ENCODE measurements at regions of chr2 and their contacts with region 1.

Region 1: DNA sequence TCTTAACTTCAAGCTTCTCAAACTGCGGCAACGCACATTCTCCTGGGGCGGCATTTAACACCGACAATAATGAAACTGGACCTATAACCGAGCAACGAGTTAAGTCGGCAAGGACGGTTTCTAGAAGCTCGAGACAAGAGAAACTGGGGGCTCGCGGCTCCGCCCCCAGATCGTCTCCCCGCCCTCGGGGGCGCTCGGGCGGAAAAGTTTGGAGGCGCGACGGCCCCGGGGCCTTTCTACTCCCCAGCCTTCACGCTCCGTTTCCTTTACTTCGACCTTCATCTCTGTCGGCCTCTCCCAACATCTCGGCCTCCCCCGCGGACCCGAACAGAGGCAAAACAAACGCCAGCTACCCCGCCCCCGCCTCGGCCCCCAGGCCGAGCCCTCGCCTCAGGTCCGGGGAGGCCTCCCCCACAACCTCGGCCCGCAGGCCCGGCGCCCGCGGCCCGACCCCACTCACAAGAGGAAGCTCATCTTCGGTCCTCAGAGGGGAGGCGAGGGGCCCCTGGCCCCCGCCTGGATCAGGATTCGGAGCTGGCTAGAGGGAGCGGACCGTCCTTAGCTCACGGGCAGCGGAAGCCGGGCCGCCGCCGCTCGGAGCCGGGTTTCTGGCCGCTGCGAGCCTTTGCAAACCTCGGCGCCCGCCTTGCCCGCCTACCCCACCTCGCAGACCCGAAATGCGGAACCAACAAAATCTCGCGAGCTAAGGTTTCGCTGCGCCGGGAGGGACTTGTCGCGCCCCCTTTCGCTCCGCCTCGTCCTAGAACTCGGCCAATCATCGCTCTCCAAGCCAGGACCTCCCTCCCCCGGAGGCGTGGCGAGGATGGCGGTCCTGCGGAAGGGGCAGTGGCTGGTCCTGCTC is at the start of gene MOB1A:
- DNase-seq: peak; percentile 93 to 99 (median 97)
- ATAC-seq: peak; percentile 95
- H3K4me3 ChIP-seq: peak within 1 kb of the TSS; percentile 62
- H3K4me3 Mint-ChIP-seq: peak within 1 kb of the TSS; percentile 95
- H3K27ac ChIP-seq: peak within 1 kb of the TSS; percentile 89 to 96
- H3K27ac Mint-ChIP-seq: peak within 1 kb of the TSS; percentile 91
- H3K4me1 ChIP-seq: peaks cover 35% of the 10 kb centered on the region
- H3K4me1 Mint-ChIP-seq: peaks cover 39% of the 10 kb centered on the region
- H3K27me3 ChIP-seq: no peaks in the 10 kb centered on the region
- H3K27me3 Mint-ChIP-seq: no peaks in the 10 kb centered on the region
- CTCF ChIP-seq: no peak
- total RNA-seq, gene MOB1A: 150 to 159 TPM

Region 2: DNA sequence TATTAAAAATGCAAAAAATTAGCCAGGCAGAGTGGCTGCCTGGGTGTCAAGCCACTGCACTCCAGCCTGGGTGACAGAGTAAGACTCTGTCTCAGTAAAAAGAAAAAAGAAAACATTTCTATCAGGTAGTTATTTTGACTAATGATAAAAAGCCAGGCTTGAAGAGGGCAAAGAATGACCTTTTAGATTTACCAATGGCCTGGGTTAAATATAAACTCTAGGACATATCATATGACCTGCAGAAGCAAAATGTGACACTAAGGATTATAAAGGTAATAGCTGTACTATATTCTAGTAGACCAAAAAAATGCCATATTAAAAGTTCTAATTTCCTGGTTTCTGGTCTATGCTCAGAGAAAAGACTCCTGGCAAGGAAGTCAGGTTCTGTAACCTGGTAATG is 365.8 kb before region 1 on chr2:
- CTCF ChIA-PET with region 1: no interaction called
- POLR2A ChIA-PET with region 1: no interaction called
- intact Hi-C with region 1: no loop called
- DNase-seq: no peak
- ATAC-seq: no peak
- H3K4me3 ChIP-seq: no peak overlapping the region
- H3K4me3 Mint-ChIP-seq: no peak overlapping the region
- H3K27ac ChIP-seq: no peak overlapping the region
- H3K27ac Mint-ChIP-seq: no peak overlapping the region
- H3K4me1 ChIP-seq: no peaks in the 10 kb centered on the region
- H3K4me1 Mint-ChIP-seq: no peaks in the 10 kb centered on the region
- H3K27me3 ChIP-seq: peaks cover 0 to 2% of the 10 kb centered on the region in 2 experiments
- H3K27me3 Mint-ChIP-seq: peaks cover 21% of the 10 kb centered on the region
- CTCF ChIP-seq: no peak

Region 3: DNA sequence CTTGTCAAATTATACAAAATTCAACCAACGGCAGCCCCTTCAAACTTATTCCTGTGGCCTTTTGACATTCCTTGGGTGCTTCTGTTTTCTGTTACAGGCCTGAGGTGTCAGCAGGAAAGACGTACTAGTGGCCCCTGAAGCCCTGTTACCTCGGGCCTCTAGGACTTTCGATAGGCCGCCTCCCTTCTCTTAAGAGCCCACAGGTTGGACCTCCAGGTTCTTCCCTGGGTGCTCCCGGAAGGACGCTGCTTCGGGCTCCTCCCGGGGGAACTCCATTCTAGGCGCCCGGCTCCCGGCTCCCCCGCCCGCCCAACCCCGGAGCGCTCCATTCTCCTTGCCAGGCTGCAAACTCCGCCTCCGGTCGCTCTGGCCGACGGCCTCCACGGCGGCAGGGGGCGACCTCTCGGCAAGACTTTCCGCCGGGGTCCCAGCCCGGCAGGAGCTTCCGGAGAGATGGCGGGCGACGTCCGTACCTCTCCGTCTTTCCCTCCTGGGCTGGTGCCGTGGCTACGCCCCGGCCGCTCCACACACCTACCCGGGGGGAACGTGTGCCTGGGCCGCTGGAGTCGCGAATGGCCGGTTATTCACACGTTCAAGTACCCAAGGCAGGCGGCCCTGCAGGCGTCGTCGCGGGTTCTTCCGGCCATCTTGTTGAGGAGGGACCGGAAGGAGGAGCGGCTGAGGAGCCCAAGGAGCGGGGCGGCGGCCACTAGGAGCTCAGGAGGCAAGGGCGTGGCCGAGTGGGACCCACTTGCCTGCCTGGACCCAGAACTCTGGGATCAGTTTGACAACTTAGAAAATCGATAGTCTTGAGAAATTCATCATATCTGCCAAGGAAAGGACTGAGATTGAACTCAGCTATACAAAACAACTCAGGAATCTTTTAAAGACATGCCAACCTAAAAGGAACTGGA is 58.3 kb before region 1 on chr2:
- CTCF ChIA-PET with region 1: interaction called, 11 read pairs
- POLR2A ChIA-PET with region 1: interaction called, 22 read pairs
- intact Hi-C with region 1: loop called in 1 of 2 experiments (anchors 1 kb)
- DNase-seq: peak; percentile 66 to 92 (median 82)
- ATAC-seq: peak; percentile 95
- H3K4me3 ChIP-seq: peak overlapping the region; percentile 86
- H3K4me3 Mint-ChIP-seq: peak overlapping the region; percentile 90
- H3K27ac ChIP-seq: peak overlapping the region; percentile 81 to 94
- H3K27ac Mint-ChIP-seq: peak overlapping the region; percentile 88
- H3K4me1 ChIP-seq: peaks cover 10% of the 10 kb centered on the region
- H3K4me1 Mint-ChIP-seq: peaks cover 11% of the 10 kb centered on the region
- H3K27me3 ChIP-seq: no peaks in the 10 kb centered on the region
- H3K27me3 Mint-ChIP-seq: no peaks in the 10 kb centered on the region
- CTCF ChIP-seq: peak; percentile 63

Region 4: DNA sequence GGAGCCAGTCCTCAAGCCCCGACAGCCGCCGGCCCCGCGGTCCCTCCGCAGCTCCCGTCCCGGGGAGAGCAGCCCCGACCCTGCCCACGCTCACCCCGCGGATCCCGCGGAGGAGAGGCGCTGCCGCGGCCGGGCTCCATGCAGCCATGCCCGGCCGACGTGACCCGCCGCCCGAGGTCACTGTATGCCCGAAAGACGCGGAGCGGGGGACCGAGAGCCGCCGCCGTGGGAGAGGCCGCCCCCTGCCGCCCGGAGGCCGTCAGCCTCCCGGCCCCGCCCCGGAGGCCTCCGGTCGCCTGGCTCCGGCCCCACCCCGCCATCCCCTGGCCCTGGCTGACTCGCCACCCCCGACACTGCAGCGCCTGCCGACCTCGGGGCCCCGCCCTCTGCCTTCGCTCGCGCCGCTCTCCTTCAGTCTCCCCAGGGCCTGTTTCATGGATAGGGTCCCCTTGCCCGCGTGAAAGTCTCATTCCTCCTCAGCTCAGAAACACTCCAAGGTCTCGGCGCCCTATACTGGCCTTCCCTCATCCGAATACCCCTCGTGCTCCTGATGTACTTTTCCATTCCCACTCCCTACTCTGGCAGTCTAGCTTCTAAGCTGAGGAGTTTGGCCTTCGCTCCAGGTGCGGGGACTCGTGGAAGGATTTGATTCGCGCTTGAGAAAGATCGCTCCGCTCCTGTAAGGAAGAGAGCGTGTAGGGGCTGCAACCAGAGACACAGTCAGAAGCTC is 30.5 kb before region 1 on chr2 and contains the start of gene BOLA3:
- CTCF ChIA-PET with region 1: interaction called, 12 read pairs
- POLR2A ChIA-PET with region 1: interaction called, 31 read pairs
- intact Hi-C with region 1: loop called in 1 of 2 experiments (anchors 2 kb)
- DNase-seq: peak; percentile 60 to 89 (median 76)
- ATAC-seq: peak; percentile 87
- H3K4me3 ChIP-seq: peak within 1 kb of the TSS; percentile 62
- H3K4me3 Mint-ChIP-seq: no peak within 1 kb of the TSS
- H3K27ac ChIP-seq: peak within 1 kb of the TSS; percentile 29 to 65
- H3K27ac Mint-ChIP-seq: no peak within 1 kb of the TSS
- H3K4me1 ChIP-seq: peaks cover 23% of the 10 kb centered on the region
- H3K4me1 Mint-ChIP-seq: no peaks in the 10 kb centered on the region
- H3K27me3 ChIP-seq: no peaks in the 10 kb centered on the region
- H3K27me3 Mint-ChIP-seq: no peaks in the 10 kb centered on the region
- CTCF ChIP-seq: peak; percentile 77
- total RNA-seq, gene BOLA3: 11.4 to 12.9 TPM

Region 5: GRCh38 chr2:74155830-74156229 is 22.6 kb before region 1 on chr2:
- CTCF ChIA-PET with region 1: no interaction called
- POLR2A ChIA-PET with region 1: interaction called, 31 read pairs
- intact Hi-C with region 1: no loop called
- DNase-seq: no peak
- ATAC-seq: no peak
- H3K4me3 ChIP-seq: no peak overlapping the region
- H3K4me3 Mint-ChIP-seq: no peak overlapping the region
- H3K27ac ChIP-seq: no peak overlapping the region
- H3K27ac Mint-ChIP-seq: no peak overlapping the region
- H3K4me1 ChIP-seq: no peaks in the 10 kb centered on the region
- H3K4me1 Mint-ChIP-seq: no peaks in the 10 kb centered on the region
- H3K27me3 ChIP-seq: no peaks in the 10 kb centered on the region
- H3K27me3 Mint-ChIP-seq: no peaks in the 10 kb centered on the region
- CTCF ChIP-seq: no peak

Region 6: GRCh38 chr2:74198461-74199274 is 20.2 kb after region 1 on chr2 and contains the start of gene MTHFD2:
- CTCF ChIA-PET with region 1: interaction called, 35 read pairs
- POLR2A ChIA-PET with region 1: interaction called, 105 read pairs
- intact Hi-C with region 1: loop called in 1 of 2 experiments (anchors 1 kb)
- DNase-seq: peak; percentile 75 to 94 (median 85)
- ATAC-seq: peak; percentile 81
- H3K4me3 ChIP-seq: peak within 1 kb of the TSS; percentile 89
- H3K4me3 Mint-ChIP-seq: peak within 1 kb of the TSS; percentile 94
- H3K27ac ChIP-seq: peak within 1 kb of the TSS; percentile 86 to 88
- H3K27ac Mint-ChIP-seq: peak within 1 kb of the TSS; percentile 93
- H3K4me1 ChIP-seq: peaks cover 25% of the 10 kb centered on the region
- H3K4me1 Mint-ChIP-seq: peaks cover 31% of the 10 kb centered on the region
- H3K27me3 ChIP-seq: no peaks in the 10 kb centered on the region
- H3K27me3 Mint-ChIP-seq: no peaks in the 10 kb centered on the region
- CTCF ChIP-seq: peak; percentile 81
- total RNA-seq, gene MTHFD2: 18.6 to 21.6 TPM

Region 7: DNA sequence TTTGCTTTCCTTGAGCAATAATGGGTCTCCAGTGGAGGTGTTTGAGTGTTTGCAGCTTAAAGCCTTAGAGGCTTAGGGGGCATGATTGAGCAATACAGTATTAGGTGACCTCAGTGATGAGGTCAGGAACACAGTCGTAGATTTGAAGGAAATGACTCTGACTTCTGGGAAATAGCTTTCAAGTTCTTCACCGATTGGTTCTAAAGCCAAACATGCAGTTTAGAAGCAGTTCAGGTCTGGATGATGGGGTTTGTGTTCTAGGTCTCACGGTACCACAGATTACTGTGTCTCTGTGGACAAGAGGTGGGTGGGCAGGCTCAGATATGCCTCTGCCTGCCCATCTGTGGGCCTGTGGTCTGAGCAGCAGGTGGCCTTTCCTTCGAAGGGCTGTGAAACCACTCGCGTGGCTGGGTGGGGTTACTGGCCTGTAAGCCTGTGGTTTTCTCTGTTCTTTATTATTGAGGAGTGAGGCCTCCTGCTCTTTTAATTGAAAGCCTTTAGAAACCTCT is 27.8 kb after region 1 on chr2:
- CTCF ChIA-PET with region 1: interaction called, 6 read pairs
- POLR2A ChIA-PET with region 1: interaction called, 56 read pairs
- intact Hi-C with region 1: no loop called
- DNase-seq: peak in 9 of 14 experiments; percentile 7 to 75 (median 19)
- ATAC-seq: peak; percentile 87
- H3K4me3 ChIP-seq: peak overlapping the region; percentile 31
- H3K4me3 Mint-ChIP-seq: peak overlapping the region; percentile 50
- H3K27ac ChIP-seq: peak overlapping the region; percentile 80 to 88
- H3K27ac Mint-ChIP-seq: peak overlapping the region; percentile 95
- H3K4me1 ChIP-seq: peaks cover 33% of the 10 kb centered on the region
- H3K4me1 Mint-ChIP-seq: peaks cover 42% of the 10 kb centered on the region
- H3K27me3 ChIP-seq: no peaks in the 10 kb centered on the region
- H3K27me3 Mint-ChIP-seq: no peaks in the 10 kb centered on the region
- CTCF ChIP-seq: no peak